MCF 10A (cell line): ENCODE measurements at regions of chr6 and their contacts with region 1.

Region 1: GRCh38 chr6:6547110-6547879 is 41.2 kb upstream of the LY86 start:
- DNase-seq: peak; percentile 76
- H3K4me3 Mint-ChIP-seq: peak overlapping the region; percentile 53
- H3K27ac Mint-ChIP-seq: no peak overlapping the region
- H3K4me1 Mint-ChIP-seq: no peaks in the 10 kb centered on the region
- H3K27me3 Mint-ChIP-seq: peaks cover 14% of the 10 kb centered on the region
- CTCF ChIP-seq: peak; percentile 92

Region 2: GRCh38 chr6:5422321-5422915 is 1124.9 kb before region 1 on chr6:
- CTCF ChIA-PET with region 1: interaction called, 5 read pairs
- POLR2A ChIA-PET with region 1: no interaction called
- intact Hi-C with region 1: loop called (anchors 1 kb)
- DNase-seq: peak; percentile 53
- H3K4me3 Mint-ChIP-seq: no peak overlapping the region
- H3K27ac Mint-ChIP-seq: no peak overlapping the region
- H3K4me1 Mint-ChIP-seq: peaks cover 9% of the 10 kb centered on the region
- H3K27me3 Mint-ChIP-seq: no peaks in the 10 kb centered on the region
- CTCF ChIP-seq: peak; percentile 38

Region 3: DNA sequence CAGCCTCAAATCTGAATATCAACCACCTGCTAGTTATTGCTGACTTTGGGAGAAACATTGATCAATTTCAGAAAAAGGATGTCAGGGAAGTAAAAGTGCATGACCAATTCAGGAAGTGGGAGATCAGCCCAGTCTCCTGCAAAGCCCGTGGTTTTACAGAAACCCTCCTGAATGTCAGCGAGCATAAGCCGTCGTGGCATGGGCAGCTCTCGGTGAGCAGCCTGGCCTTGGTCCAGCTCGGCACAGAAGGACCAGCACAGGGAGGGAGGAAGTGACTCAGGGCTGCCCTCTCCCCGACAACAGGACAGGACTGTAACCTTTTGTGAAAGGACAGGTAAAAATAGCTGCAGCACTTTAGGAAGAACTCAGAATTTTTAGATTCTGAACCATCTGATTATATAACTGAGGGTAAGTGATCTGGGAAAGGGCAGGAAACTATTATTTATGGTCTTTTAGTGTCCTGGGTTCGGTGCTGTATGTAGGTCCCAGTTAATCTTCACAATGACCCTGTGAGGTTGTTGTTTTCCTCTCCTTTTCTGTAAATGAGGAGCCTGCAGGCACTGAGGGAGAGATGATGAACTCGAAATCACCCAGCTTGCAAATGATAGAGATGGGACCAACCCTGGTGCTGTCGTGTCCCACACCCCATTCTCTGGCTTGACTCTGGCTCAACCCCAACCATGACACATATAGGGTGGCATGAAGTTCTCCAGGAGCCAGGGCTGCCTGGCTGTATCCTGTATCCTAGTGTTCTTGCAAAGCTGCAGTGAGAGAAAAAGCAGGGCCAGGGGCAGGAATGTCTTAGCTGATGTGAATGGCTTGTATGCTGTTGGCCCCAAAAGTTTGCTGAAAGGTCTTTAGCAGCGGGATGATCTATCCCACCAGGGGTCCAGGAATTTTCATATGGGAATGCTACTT is 578.2 kb before region 1 on chr6:
- CTCF ChIA-PET with region 1: no interaction called
- POLR2A ChIA-PET with region 1: no interaction called
- intact Hi-C with region 1: loop called (anchors 1 kb)
- DNase-seq: peak; percentile 77
- H3K4me3 Mint-ChIP-seq: peak overlapping the region; percentile 24
- H3K27ac Mint-ChIP-seq: peak overlapping the region; percentile 31
- H3K4me1 Mint-ChIP-seq: peaks cover 16% of the 10 kb centered on the region
- H3K27me3 Mint-ChIP-seq: peaks cover 3% of the 10 kb centered on the region
- CTCF ChIP-seq: no peak

Region 4: GRCh38 chr6:6105472-6106036 is 441.7 kb before region 1 on chr6:
- CTCF ChIA-PET with region 1: interaction called, 4 read pairs
- POLR2A ChIA-PET with region 1: no interaction called
- intact Hi-C with region 1: loop called (anchors 1 kb)
- DNase-seq: peak; percentile 16
- H3K4me3 Mint-ChIP-seq: no peak overlapping the region
- H3K27ac Mint-ChIP-seq: no peak overlapping the region
- H3K4me1 Mint-ChIP-seq: no peaks in the 10 kb centered on the region
- H3K27me3 Mint-ChIP-seq: peaks cover 70% of the 10 kb centered on the region
- CTCF ChIP-seq: no peak

Region 5: GRCh38 chr6:6221787-6222535 is 325.3 kb before region 1 on chr6:
- CTCF ChIA-PET with region 1: interaction called, 4 read pairs
- POLR2A ChIA-PET with region 1: interaction called, 3 read pairs
- intact Hi-C with region 1: loop called (anchors 2 kb)
- DNase-seq: peak; percentile 50
- H3K4me3 Mint-ChIP-seq: no peak overlapping the region
- H3K27ac Mint-ChIP-seq: no peak overlapping the region
- H3K4me1 Mint-ChIP-seq: peaks cover 9% of the 10 kb centered on the region
- H3K27me3 Mint-ChIP-seq: peaks cover 28% of the 10 kb centered on the region
- CTCF ChIP-seq: no peak

Region 6: DNA sequence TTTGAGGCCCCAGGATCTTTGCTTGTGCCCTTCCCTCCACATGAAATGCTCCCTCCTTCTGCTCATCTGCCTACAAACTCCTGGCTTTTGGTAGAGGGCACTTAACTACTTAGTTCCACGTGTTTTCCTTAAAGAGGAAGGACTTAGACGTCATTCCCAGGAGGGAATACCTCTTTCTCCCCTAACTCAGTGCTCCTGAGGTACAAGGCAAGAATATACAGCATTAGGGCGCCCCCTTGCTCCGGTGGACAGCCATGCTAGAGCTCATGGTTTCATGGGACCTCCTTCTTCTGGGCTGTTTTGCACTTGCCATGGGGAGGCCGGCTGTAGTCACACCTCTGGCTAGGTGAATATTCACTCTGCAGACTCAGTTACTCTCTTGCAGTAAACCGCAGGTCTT is 52.6 kb before region 1 on chr6:
- CTCF ChIA-PET with region 1: interaction called, 6 read pairs
- POLR2A ChIA-PET with region 1: no interaction called
- intact Hi-C with region 1: loop called (anchors 2 kb)
- DNase-seq: peak; percentile 82
- H3K4me3 Mint-ChIP-seq: no peak overlapping the region
- H3K27ac Mint-ChIP-seq: no peak overlapping the region
- H3K4me1 Mint-ChIP-seq: peaks cover 14% of the 10 kb centered on the region
- H3K27me3 Mint-ChIP-seq: no peaks in the 10 kb centered on the region
- CTCF ChIP-seq: peak; percentile 69

Region 7: GRCh38 chr6:6981681-6982327 is 434.5 kb after region 1 on chr6:
- CTCF ChIA-PET with region 1: no interaction called
- POLR2A ChIA-PET with region 1: no interaction called
- intact Hi-C with region 1: no loop called
- DNase-seq: peak; percentile 72
- H3K4me3 Mint-ChIP-seq: no peak overlapping the region
- H3K27ac Mint-ChIP-seq: peak overlapping the region; percentile 3
- H3K4me1 Mint-ChIP-seq: peaks cover 15% of the 10 kb centered on the region
- H3K27me3 Mint-ChIP-seq: no peaks in the 10 kb centered on the region
- CTCF ChIP-seq: no peak